CD14-positive monocyte (primary cell): ENCODE measurements at regions of chr1 and their contacts with region 1.

Region 1: GRCh38 chr1:156146020-156146768 is 7.2 kb upstream of the SEMA4A start:
- DNase-seq: peak; percentile 75 to 87 (median 85)
- H3K4me3 ChIP-seq: peak overlapping the region; percentile 12 to 59 (median 28)
- H3K4me3 Mint-ChIP-seq: peak overlapping the region; percentile 78 to 94
- H3K27ac ChIP-seq: peak overlapping the region; percentile 94 to 98
- H3K27ac Mint-ChIP-seq: peak overlapping the region; percentile 79 to 99 (median 94)
- H3K4me1 ChIP-seq: peaks cover 55 to 56% of the 10 kb centered on the region in 2 donors
- H3K4me1 Mint-ChIP-seq: peaks cover 55% of the 10 kb centered on the region
- H3K27me3 ChIP-seq: no peaks in the 10 kb centered on the region
- H3K27me3 Mint-ChIP-seq: peaks cover 4 to 9% (median 8%) of the 10 kb centered on the region in 3 donors
- CTCF ChIP-seq: peak; percentile 69

Region 2: GRCh38 chr1:156193488-156194299 is 47.5 kb after region 1 on chr1 and contains the start of gene SLC25A44:
- intact Hi-C with region 1: loop called in 1 of 2 experiments (anchors 5 kb)
- DNase-seq: peak; percentile 99
- H3K4me3 ChIP-seq: peak within 1 kb of the TSS; percentile 87 to 88 (median 88)
- H3K4me3 Mint-ChIP-seq: peak within 1 kb of the TSS; percentile 95 to 98
- H3K27ac ChIP-seq: peak within 1 kb of the TSS; percentile 61 to 90
- H3K27ac Mint-ChIP-seq: peak within 1 kb of the TSS; percentile 93 to 99 (median 95)
- H3K4me1 ChIP-seq: peaks cover 27 to 39% of the 10 kb centered on the region in 2 donors
- H3K4me1 Mint-ChIP-seq: peaks cover 46% of the 10 kb centered on the region
- H3K27me3 ChIP-seq: no peaks in the 10 kb centered on the region
- H3K27me3 Mint-ChIP-seq: peaks cover 0 to 1% (median 0%) of the 10 kb centered on the region in 3 donors
- CTCF ChIP-seq: peak; percentile 29
- polyA plus RNA-seq, gene SLC25A44: 17.1 to 28.8 (median 24.1) TPM

Region 3: DNA sequence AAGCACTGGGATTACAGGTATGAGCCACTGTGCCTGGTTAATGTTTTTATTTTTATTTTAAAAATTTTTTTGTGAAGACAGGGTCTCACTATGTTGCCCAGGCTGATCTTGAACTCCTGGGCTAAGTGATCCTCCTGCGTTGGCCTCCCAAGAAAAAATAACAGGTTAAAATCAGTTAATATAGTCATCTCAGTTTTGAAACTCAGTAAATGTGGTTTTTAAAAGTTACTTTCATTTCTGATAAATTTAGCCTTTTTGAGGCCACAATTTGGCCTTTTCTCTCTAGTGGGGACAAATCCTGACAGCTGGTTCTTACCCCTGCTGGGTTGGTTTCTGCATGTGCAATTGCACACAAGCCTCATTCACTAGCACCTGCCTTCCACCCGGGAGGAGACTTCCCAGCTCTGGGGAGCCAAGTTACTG is 79.9 kb after region 1 on chr1:
- intact Hi-C with region 1: loop called (anchors 2 to 5 kb)
- DNase-seq: no peak
- H3K4me3 ChIP-seq: no peak overlapping the region
- H3K4me3 Mint-ChIP-seq: no peak overlapping the region
- H3K27ac ChIP-seq: no peak overlapping the region
- H3K27ac Mint-ChIP-seq: no peak overlapping the region
- H3K4me1 ChIP-seq: no peaks in the 10 kb centered on the region
- H3K4me1 Mint-ChIP-seq: peaks cover 4% of the 10 kb centered on the region
- H3K27me3 ChIP-seq: no peaks in the 10 kb centered on the region
- H3K27me3 Mint-ChIP-seq: no peaks in the 10 kb centered on the region
- CTCF ChIP-seq: no peak

Region 4: GRCh38 chr1:156319664-156320063 is 173.5 kb after region 1 on chr1:
- intact Hi-C with region 1: loop called in 1 of 2 experiments (anchors 5 kb)
- DNase-seq: peak in 2 of 3 donors; percentile 7 to 15
- H3K4me3 ChIP-seq: no peak overlapping the region
- H3K4me3 Mint-ChIP-seq: no peak overlapping the region
- H3K27ac ChIP-seq: no peak overlapping the region
- H3K27ac Mint-ChIP-seq: no peak overlapping the region
- H3K4me1 ChIP-seq: no peaks in the 10 kb centered on the region
- H3K4me1 Mint-ChIP-seq: no peaks in the 10 kb centered on the region
- H3K27me3 ChIP-seq: no peaks in the 10 kb centered on the region
- H3K27me3 Mint-ChIP-seq: peaks cover 0 to 1% (median 0%) of the 10 kb centered on the region in 3 donors
- CTCF ChIP-seq: peak; percentile 71

Region 5: GRCh38 chr1:156767101-156767878 is 621.1 kb after region 1 on chr1 and contains the start of gene PRCC:
- intact Hi-C with region 1: no loop called
- DNase-seq: peak; percentile 97 to 99 (median 99)
- H3K4me3 ChIP-seq: peak within 1 kb of the TSS; percentile 74 to 95 (median 79)
- H3K4me3 Mint-ChIP-seq: no peak within 1 kb of the TSS
- H3K27ac ChIP-seq: peak within 1 kb of the TSS; percentile 93 to 97
- H3K27ac Mint-ChIP-seq: no peak within 1 kb of the TSS
- H3K4me1 ChIP-seq: peaks cover 31 to 37% of the 10 kb centered on the region in 2 donors
- H3K4me1 Mint-ChIP-seq: peaks cover 29% of the 10 kb centered on the region
- H3K27me3 ChIP-seq: no peaks in the 10 kb centered on the region
- H3K27me3 Mint-ChIP-seq: peaks cover 0 to 2% (median 0%) of the 10 kb centered on the region in 3 donors
- CTCF ChIP-seq: no peak
- polyA plus RNA-seq, gene PRCC: 26.7 to 37.1 (median 29.6) TPM

Region 6: DNA sequence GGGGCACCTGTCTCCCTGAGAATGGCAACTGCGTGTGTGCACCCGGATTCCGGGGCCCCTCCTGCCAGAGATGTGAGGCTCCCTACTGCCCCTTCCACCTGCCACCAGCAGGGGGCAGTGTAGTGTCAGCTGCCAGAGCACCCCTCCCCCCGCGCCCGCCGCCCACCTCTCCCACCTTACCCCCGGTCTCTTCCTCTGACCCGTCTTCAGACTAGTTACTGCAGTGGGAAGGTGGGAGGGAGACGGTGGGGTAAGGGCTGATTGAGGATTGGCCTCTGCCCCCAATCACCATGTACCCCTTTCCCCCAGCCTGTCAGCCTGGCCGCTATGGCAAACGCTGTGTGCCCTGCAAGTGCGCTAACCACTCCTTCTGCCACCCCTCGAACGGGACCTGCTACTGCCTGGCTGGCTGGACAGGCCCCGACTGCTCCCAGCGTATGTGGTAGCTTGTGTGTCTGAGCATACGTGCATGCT is 764.2 kb after region 1 on chr1:
- intact Hi-C with region 1: no loop called
- DNase-seq: peak in 1 of 3 donors; percentile 32
- H3K4me3 ChIP-seq: no peak overlapping the region
- H3K4me3 Mint-ChIP-seq: no peak overlapping the region
- H3K27ac ChIP-seq: no peak overlapping the region
- H3K27ac Mint-ChIP-seq: no peak overlapping the region
- H3K4me1 ChIP-seq: peaks cover 7 to 10% of the 10 kb centered on the region in 2 donors
- H3K4me1 Mint-ChIP-seq: peaks cover 18% of the 10 kb centered on the region
- H3K27me3 ChIP-seq: no peaks in the 10 kb centered on the region
- H3K27me3 Mint-ChIP-seq: peaks cover 4 to 5% (median 4%) of the 10 kb centered on the region in 3 donors
- CTCF ChIP-seq: peak; percentile 96